ENCODE measurements at regions of chrX and their contacts with region 1.

Region 1: DNA sequence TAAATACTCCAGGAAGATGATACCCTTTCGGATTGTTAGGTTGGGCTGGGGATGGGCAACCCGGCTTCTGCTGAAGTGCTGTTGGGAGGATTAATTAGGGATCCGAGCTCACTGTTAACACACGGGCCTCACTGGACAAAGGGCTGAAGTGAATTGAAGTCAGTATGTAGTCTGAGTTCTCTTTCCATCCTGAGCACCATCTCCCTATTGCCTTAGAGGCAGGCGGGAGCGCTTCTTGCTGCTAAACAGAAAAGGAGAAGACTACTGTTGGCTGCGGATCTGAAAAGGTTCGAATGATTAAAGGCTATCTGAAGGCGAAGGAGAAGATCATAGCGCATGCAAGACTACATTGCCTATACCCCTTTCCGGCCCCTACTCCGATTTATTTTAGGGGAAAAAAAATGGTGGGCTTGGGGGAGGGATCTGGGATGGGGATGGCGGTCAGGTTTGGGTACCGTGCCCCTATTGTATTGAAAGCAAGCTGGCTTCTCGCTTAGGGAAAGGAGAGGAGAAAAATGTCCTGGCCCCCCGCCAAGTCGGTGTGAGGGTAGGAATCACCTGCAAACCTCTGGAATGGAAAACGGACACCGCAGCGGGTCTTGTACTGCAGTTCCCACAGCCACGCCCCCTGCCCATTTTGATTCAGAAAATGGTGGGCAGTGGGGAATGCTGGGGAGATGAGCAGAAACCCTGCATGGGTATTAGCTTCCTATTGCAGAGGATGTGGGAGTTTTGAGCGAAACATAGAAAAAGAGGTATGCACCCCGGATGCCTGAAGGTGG is 22.3 kb downstream of the MORF4L2 start:
- DNase-seq: peak; percentile 42
- ATAC-seq: peak; percentile 65
- H3K4me3 Mint-ChIP-seq: peak overlapping the region; percentile 84
- H3K27ac Mint-ChIP-seq: no peak overlapping the region
- H3K4me1 Mint-ChIP-seq: peaks cover 20% of the 10 kb centered on the region
- H3K27me3 Mint-ChIP-seq: peaks cover 7% of the 10 kb centered on the region
- CTCF ChIP-seq: no peak

Region 2: GRCh38 chrX:103382877-103383276 is 281.3 kb before region 1 on chrX:
- CTCF ChIA-PET with region 1: no interaction called
- POLR2A ChIA-PET with region 1: no interaction called
- DNase-seq: no peak
- ATAC-seq: no peak
- H3K4me3 Mint-ChIP-seq: no peak overlapping the region
- H3K27ac Mint-ChIP-seq: no peak overlapping the region
- H3K4me1 Mint-ChIP-seq: 0 out of 2 replicates have a peak, but pooled peaks cover 5% of the 10 kb centered on the region
- H3K27me3 Mint-ChIP-seq: no peaks in the 10 kb centered on the region; the same call in 1 of the 2 replicates
- CTCF ChIP-seq: no peak

Region 3: GRCh38 chrX:103629318-103630170 is 34.6 kb before region 1 on chrX:
- CTCF ChIA-PET with region 1: interaction called, 10 read pairs
- POLR2A ChIA-PET with region 1: no interaction called
- DNase-seq: peak; percentile 71
- ATAC-seq: peak; percentile 81
- H3K4me3 Mint-ChIP-seq: peak overlapping the region; percentile 90
- H3K27ac Mint-ChIP-seq: peak overlapping the region; percentile 80
- H3K4me1 Mint-ChIP-seq: peaks cover 10% of the 10 kb centered on the region
- H3K27me3 Mint-ChIP-seq: no peaks in the 10 kb centered on the region
- CTCF ChIP-seq: no peak